Prostate gland (tissue), 2 donors: ENCODE measurements at regions of chr1 and their contacts with region 1.

Region 1: GRCh38 chr1:28282426-28283407 is 23.4 kb downstream of the SESN2 start:
- DNase-seq: no peak
- H3K4me3 ChIP-seq: no peak overlapping the region
- H3K27ac ChIP-seq: no peak overlapping the region
- H3K4me1 ChIP-seq: no peaks in the 10 kb centered on the region
- H3K27me3 ChIP-seq: no peaks in the 10 kb centered on the region
- CTCF ChIP-seq: no peak
- POLR2A ChIP-seq: no peak

Region 2: DNA sequence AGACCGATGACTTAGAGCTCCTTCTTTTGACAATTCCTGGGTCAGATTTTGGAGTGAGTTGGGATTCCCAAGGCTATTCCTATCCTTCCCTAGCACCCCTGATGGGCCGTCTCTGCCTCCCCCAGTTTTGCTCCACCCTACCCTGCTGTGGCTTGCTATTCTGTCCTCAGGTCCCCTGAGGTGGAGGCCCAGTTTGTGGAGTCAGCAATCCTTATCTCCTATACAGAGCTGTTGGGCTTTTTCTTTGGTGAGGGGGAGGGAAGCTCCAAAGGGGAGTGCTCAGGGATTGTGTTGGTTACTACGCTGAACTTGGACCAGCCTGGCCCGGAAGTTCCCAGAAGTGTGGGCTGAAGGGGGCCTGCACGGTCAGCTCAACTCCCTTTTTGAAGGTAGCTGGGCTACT is 15.8 kb before region 1 on chr1:
- intact Hi-C with region 1: loop called (anchors 1 kb)
- DNase-seq: no peak
- H3K4me3 ChIP-seq: no peak overlapping the region
- H3K27ac ChIP-seq: no peak overlapping the region
- H3K4me1 ChIP-seq: no peaks in the 10 kb centered on the region
- H3K27me3 ChIP-seq: no peaks in the 10 kb centered on the region
- CTCF ChIP-seq: no peak
- POLR2A ChIP-seq: no peak